Naive thymus-derived CD4-positive, alpha-beta T cell (primary cell): ENCODE measurements at regions of chr12 and their contacts with region 1.

Region 1: GRCh38 chr12:53321074-53321814 is at the start of gene AAAS:
- DNase-seq: peak; percentile 89 to 95 (median 94)
- ATAC-seq: peak; percentile 89
- H3K4me3 ChIP-seq: peak within 1 kb of the TSS; percentile 98
- H3K4me3 Mint-ChIP-seq: peak within 1 kb of the TSS; percentile 94 to 99 (median 96)
- H3K27ac ChIP-seq: peak within 1 kb of the TSS; percentile 73
- H3K27ac Mint-ChIP-seq: peak within 1 kb of the TSS; percentile 94 to 98 (median 94)
- H3K4me1 ChIP-seq: peaks cover 25 to 37% of the 10 kb centered on the region in 2 donors
- H3K4me1 Mint-ChIP-seq: peaks cover 23 to 47% (median 43%) of the 10 kb centered on the region in 7 donors
- H3K27me3 ChIP-seq: no peaks in the 10 kb centered on the region
- H3K27me3 Mint-ChIP-seq: peaks cover 0 to 3% (median 0%) of the 10 kb centered on the region in 5 donors
- total RNA-seq, gene AAAS: 35.4 to 73.5 (median 69.0) TPM

Region 2: DNA sequence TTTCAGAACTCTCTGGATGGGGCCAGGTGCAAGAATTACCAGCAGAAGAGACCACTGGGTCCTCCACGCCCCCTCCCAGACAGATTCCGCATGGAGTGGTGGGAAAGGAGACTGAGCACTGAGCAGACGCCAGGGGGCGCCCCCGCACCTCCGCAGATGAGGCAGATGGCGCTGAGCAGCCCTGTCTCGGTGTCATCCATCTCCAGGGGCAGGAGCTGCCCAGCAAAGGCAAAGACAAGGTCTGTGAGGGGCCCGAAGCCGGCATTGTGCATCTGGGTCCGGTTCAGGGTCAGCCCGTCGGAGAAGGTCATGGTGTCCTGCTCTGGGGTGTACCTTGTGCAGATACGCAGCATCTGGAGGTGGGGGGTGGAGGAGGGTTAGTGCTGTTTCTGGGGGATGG is 107.9 kb before region 1 on chr12:
- CTCF ChIA-PET with region 1: interaction called, 32 read pairs
- POLR2A ChIA-PET with region 1: interaction called, 5 read pairs
- intact Hi-C with region 1: loop called in 1 of 2 experiments (anchors 1 kb)
- DNase-seq: peak; percentile 71 to 85 (median 80)
- ATAC-seq: peak; percentile 84
- H3K4me3 ChIP-seq: no peak overlapping the region
- H3K4me3 Mint-ChIP-seq: peak overlapping the region in 2 of 10 donors; percentile 5 to 21
- H3K27ac ChIP-seq: peak overlapping the region; percentile 27
- H3K27ac Mint-ChIP-seq: peak overlapping the region in 8 of 9 donors; percentile 24 to 92 (median 74)
- H3K4me1 ChIP-seq: peaks cover 35 to 44% of the 10 kb centered on the region in 2 donors
- H3K4me1 Mint-ChIP-seq: peaks cover 54 to 93% (median 74%) of the 10 kb centered on the region in 7 donors
- H3K27me3 ChIP-seq: no peaks in the 10 kb centered on the region
- H3K27me3 Mint-ChIP-seq: no peaks in the 10 kb centered on the region

Region 3: DNA sequence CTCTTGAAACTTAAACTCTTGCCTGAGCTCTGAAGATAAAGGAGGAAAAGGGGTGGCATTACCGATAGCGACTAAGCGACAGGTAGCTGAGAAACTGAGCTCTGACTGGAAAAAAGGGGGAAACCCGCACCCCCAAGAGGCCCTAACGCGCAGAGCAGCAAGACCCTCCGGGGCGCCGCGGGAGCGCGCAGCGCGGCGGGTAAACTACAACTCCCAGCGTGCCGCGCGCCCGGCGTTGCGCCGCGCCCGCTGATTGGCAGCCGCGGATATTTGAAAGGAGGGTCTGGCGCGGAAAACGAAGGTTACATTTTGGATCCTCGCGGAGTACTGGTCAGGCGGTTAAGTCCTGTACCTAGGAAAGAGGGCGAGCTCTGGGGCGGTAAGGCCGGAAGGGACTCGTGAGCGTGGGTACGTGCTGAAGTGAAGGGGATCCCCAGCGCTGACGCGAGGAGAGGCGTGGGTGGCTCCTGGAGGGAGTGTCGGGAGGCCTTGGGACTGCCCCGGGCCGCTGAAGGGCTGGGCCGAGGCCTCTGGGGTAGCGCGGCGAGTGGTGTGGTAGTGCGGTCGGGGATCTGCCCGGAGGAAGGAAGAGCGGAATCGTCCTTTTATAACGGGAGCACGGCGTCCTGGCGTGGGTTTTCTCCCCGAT is 53.1 kb before region 1 on chr12 and contains the start of gene ESPL1:
- CTCF ChIA-PET with region 1: interaction called, 3 read pairs
- POLR2A ChIA-PET with region 1: interaction called, 5 read pairs
- intact Hi-C with region 1: loop called (anchors 1 kb)
- DNase-seq: peak; percentile 67 to 91 (median 81)
- ATAC-seq: peak; percentile 93
- H3K4me3 ChIP-seq: peak within 1 kb of the TSS; percentile 80
- H3K4me3 Mint-ChIP-seq: peak within 1 kb of the TSS; percentile 95 to 99 (median 96)
- H3K27ac ChIP-seq: peak within 1 kb of the TSS; percentile 83
- H3K27ac Mint-ChIP-seq: peak within 1 kb of the TSS; percentile 44 to 98 (median 88)
- H3K4me1 ChIP-seq: peaks cover 9 to 11% of the 10 kb centered on the region in 2 donors
- H3K4me1 Mint-ChIP-seq: peaks cover 10 to 54% (median 20%) of the 10 kb centered on the region in 7 donors
- H3K27me3 ChIP-seq: no peaks in the 10 kb centered on the region
- H3K27me3 Mint-ChIP-seq: no peaks in the 10 kb centered on the region
- total RNA-seq, gene ESPL1: 0.08 to 65.4 (median 1.1) TPM

Region 4: GRCh38 chr12:53441040-53441833 is 120.0 kb after region 1 on chr12 and contains the start of gene PRR13:
- CTCF ChIA-PET with region 1: no interaction called
- POLR2A ChIA-PET with region 1: interaction called, 4 read pairs
- intact Hi-C with region 1: loop called in 1 of 2 experiments (anchors 1 kb)
- DNase-seq: peak; percentile 90 to 99 (median 96)
- ATAC-seq: peak; percentile 99
- H3K4me3 ChIP-seq: peak within 1 kb of the TSS; percentile 93
- H3K4me3 Mint-ChIP-seq: peak within 1 kb of the TSS; percentile 89 to 99 (median 96)
- H3K27ac ChIP-seq: peak within 1 kb of the TSS; percentile 92
- H3K27ac Mint-ChIP-seq: peak within 1 kb of the TSS; percentile 91 to 97 (median 97)
- H3K4me1 ChIP-seq: peaks cover 18 to 24% of the 10 kb centered on the region in 2 donors
- H3K4me1 Mint-ChIP-seq: peaks cover 30 to 52% (median 43%) of the 10 kb centered on the region in 7 donors
- H3K27me3 ChIP-seq: no peaks in the 10 kb centered on the region
- H3K27me3 Mint-ChIP-seq: no peaks in the 10 kb centered on the region
- total RNA-seq, gene PRR13: 147 to 215 (median 201) TPM

Region 5: DNA sequence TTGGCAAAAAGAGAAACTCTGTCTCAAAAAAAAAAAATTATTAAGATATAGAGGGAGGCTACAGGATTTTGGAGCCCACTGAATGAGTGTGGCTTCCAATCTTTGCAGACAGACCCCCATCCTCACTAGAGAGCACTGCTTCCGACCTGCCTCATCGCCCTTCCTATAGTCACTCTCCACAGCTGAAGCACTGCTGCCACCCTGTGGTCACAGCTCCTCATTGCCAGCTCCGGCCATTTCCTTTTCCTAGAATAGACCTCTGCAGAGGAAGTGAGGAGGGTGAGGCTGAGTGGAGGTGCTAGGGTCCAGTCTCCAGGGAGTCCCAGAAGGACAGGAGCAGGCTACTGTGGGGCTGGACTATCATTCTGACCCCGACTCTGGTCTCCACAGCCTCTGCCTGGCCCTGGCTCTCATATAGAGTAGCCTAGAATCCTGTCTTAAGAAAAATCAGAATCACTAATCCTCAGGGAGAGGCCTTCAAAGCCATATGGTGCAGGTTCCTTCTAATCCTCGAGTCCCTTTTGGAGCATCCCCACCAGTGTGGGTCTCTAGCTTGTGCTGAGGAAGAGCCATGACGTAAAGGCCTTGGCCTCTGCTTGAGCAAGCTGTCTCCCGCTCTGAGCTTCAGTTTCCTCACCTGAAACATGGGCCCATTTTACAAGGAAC is 187.4 kb after region 1 on chr12:
- CTCF ChIA-PET with region 1: interaction called, 8 read pairs
- POLR2A ChIA-PET with region 1: interaction called, 3 read pairs
- intact Hi-C with region 1: loop called (anchors 1 kb)
- DNase-seq: peak; percentile 63 to 82 (median 73)
- ATAC-seq: peak; percentile 98
- H3K4me3 ChIP-seq: no peak overlapping the region
- H3K4me3 Mint-ChIP-seq: peak overlapping the region in 1 of 10 donors; percentile 39
- H3K27ac ChIP-seq: peak overlapping the region; percentile 39
- H3K27ac Mint-ChIP-seq: peak overlapping the region in 8 of 9 donors; percentile 13 to 80 (median 66)
- H3K4me1 ChIP-seq: peaks cover 6 to 7% of the 10 kb centered on the region in 2 donors
- H3K4me1 Mint-ChIP-seq: peaks cover 5 to 17% (median 9%) of the 10 kb centered on the region in 7 donors
- H3K27me3 ChIP-seq: no peaks in the 10 kb centered on the region
- H3K27me3 Mint-ChIP-seq: no peaks in the 10 kb centered on the region